PC-9 (cell line): ENCODE measurements at regions of chr9 and their contacts with region 1.

Region 1: GRCh38 chr9:125272697-125273096 is 11.1 kb downstream of the GAPVD1 start:
- DNase-seq: peak; percentile 34 to 89
- H3K4me3 ChIP-seq: peak overlapping the region; percentile 28; the same call in 1 of the 2 replicates
- H3K27ac ChIP-seq: peak overlapping the region; percentile 53
- H3K4me1 ChIP-seq: peaks cover 25% of the 10 kb centered on the region
- H3K27me3 ChIP-seq: no peaks in the 10 kb centered on the region
- CTCF ChIP-seq: no peak

Region 2: GRCh38 chr9:125261501-125262293 is 11.0 kb before region 1 on chr9 and contains the start of gene GAPVD1:
- CTCF ChIA-PET with region 1: no interaction called
- POLR2A ChIA-PET with region 1: interaction called, 11 read pairs
- intact Hi-C with region 1: no loop called
- DNase-seq: peak; percentile 88 to 95
- H3K4me3 ChIP-seq: peak within 1 kb of the TSS; percentile 78
- H3K27ac ChIP-seq: peak within 1 kb of the TSS; percentile 83
- H3K4me1 ChIP-seq: peaks cover 24% of the 10 kb centered on the region
- H3K27me3 ChIP-seq: no peaks in the 10 kb centered on the region
- CTCF ChIP-seq: no peak; the same call in 1 of the 2 replicates
- total RNA-seq, gene GAPVD1: 58.2 and 70.3 TPM in 2 replicates

Region 3: GRCh38 chr9:127035951-127036350 is 1763.3 kb after region 1 on chr9:
- CTCF ChIA-PET with region 1: no interaction called
- POLR2A ChIA-PET with region 1: no interaction called
- intact Hi-C with region 1: no loop called
- DNase-seq: no peak
- H3K4me3 ChIP-seq: no peak overlapping the region
- H3K27ac ChIP-seq: no peak overlapping the region
- H3K4me1 ChIP-seq: peaks cover 10% of the 10 kb centered on the region; the same call in 1 of the 2 replicates
- H3K27me3 ChIP-seq: no peaks in the 10 kb centered on the region
- CTCF ChIP-seq: no peak